Mammary epithelial cell (primary cell): ENCODE measurements at regions of chr7 and their contacts with region 1.

Region 1: GRCh38 chr7:56063882-56064625 is at the start of gene SUMF2:
- DNase-seq: peak; percentile 80
- H3K4me3 ChIP-seq: peak within 1 kb of the TSS; percentile 89 to 99 (median 98)
- H3K27ac ChIP-seq: peak within 1 kb of the TSS; percentile 72
- H3K4me1 ChIP-seq: peaks cover 16% of the 10 kb centered on the region
- H3K27me3 ChIP-seq: no peaks in the 10 kb centered on the region
- CTCF ChIP-seq: peak in 1 of 2 donors; percentile 40
- total RNA-seq, gene SUMF2: 128 to 215 TPM

Region 2: GRCh38 chr7:55593515-55594318 is 470.3 kb before region 1 on chr7:
- CTCF ChIA-PET with region 1: no interaction called
- dilution Hi-C with region 1: no loop called
- in situ Hi-C with region 1: no loop called
- intact Hi-C with region 1: no loop called
- DNase-seq: peak; percentile 51
- H3K4me3 ChIP-seq: no peak overlapping the region
- H3K27ac ChIP-seq: no peak overlapping the region
- H3K4me1 ChIP-seq: no peaks in the 10 kb centered on the region
- H3K27me3 ChIP-seq: no peaks in the 10 kb centered on the region
- CTCF ChIP-seq: peak; percentile 68 to 95

Region 3: DNA sequence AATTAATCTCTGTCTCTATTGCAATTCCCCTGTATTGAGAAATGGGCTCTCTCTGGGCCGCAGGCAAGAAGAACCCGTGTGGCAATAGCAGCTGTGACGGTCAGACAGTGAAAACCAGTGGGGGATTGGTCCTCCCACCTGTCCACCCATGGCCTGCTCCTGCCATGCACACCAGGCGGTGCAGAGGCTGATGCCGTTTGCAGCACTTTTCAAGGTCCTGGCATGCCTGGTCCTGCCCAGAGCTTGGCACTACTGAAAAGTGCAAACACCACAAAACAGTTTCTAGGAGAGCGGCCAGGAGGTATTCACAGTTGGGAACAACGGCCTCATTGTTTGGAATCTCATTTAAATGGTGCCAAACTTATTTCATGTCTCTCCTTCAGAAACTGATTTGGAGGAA is 54.4 kb before region 1 on chr7:
- CTCF ChIA-PET with region 1: no interaction called
- dilution Hi-C with region 1: no loop called
- in situ Hi-C with region 1: no loop called
- intact Hi-C with region 1: loop called (anchors 2 kb)
- DNase-seq: peak; percentile 95
- H3K4me3 ChIP-seq: no peak overlapping the region
- H3K27ac ChIP-seq: peak overlapping the region; percentile 86
- H3K4me1 ChIP-seq: peaks cover 24% of the 10 kb centered on the region
- H3K27me3 ChIP-seq: no peaks in the 10 kb centered on the region
- CTCF ChIP-seq: peak in 1 of 2 donors; percentile 20